CD8-positive, alpha-beta T cell (primary cell): ENCODE measurements at regions of chr3 and their contacts with region 1.

Region 1: DNA sequence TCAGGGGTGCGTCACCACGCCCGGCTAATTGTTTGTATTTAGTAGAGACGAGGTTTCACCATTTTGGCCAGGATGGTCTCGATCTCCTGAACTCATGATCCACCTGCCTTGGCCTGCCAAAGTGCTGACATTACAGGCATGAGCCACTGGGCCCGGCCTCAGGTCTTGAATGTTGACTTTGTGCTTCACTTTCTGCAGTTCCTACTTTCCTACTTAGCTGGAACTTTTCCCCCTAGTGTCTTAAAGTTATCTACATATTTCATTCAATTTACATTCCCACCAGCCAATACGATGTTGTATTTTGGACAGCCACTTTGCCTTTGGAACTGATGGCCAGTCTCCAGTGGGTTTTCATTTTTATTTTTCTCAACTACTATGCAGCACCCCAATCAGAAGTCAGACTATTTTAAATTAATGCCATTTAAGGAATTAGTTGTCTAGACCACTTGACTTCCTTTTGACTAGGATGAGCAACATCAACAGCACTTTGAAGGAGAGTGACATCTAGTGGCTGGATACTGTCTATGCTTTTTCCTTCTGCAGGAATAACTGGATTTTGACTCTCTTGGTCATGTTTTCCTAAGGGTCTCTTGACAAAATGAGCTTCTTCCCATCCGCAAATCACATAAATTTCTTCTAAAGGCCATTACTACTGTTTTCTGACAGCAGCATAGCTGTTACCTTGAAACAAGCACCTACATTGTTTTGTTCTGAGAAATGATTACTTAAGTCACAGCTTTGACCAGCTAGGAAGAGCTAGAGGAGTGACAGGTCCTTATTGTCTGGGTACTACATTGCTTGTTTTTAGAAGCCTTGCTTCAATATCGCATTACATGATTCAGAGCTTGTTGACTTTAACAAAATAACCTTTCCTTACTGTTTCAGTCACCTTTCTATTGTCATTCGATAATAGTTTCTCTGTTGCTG is 140.2 kb downstream of the ITPR1 start:
- DNase-seq: peak in 2 of 9 experiments; percentile 63 to 71
- ATAC-seq: peak; percentile 63
- H3K4me3 ChIP-seq: no peak overlapping the region
- H3K4me3 Mint-ChIP-seq: no peak overlapping the region
- H3K27ac ChIP-seq: no peak overlapping the region
- H3K27ac Mint-ChIP-seq: no peak overlapping the region
- H3K4me1 ChIP-seq: no peaks in the 10 kb centered on the region
- H3K4me1 Mint-ChIP-seq: peaks cover 2% of the 10 kb centered on the region
- H3K27me3 ChIP-seq: no peaks in the 10 kb centered on the region
- H3K27me3 Mint-ChIP-seq: no peaks in the 10 kb centered on the region
- CTCF ChIP-seq: peak; percentile 78

Region 2: GRCh38 chr3:4290272-4290893 is 343.0 kb before region 1 on chr3:
- CTCF ChIA-PET with region 1: no interaction called
- POLR2A ChIA-PET with region 1: no interaction called
- intact Hi-C with region 1: loop called in 1 of 2 experiments (anchors 2 kb)
- DNase-seq: peak in 5 of 9 experiments; percentile 8 to 69 (median 39)
- ATAC-seq: peak; percentile 81
- H3K4me3 ChIP-seq: no peak overlapping the region
- H3K4me3 Mint-ChIP-seq: no peak overlapping the region
- H3K27ac ChIP-seq: no peak overlapping the region
- H3K27ac Mint-ChIP-seq: no peak overlapping the region
- H3K4me1 ChIP-seq: peaks cover 11% of the 10 kb centered on the region
- H3K4me1 Mint-ChIP-seq: peaks cover 17% of the 10 kb centered on the region
- H3K27me3 ChIP-seq: no peaks in the 10 kb centered on the region
- H3K27me3 Mint-ChIP-seq: no peaks in the 10 kb centered on the region
- CTCF ChIP-seq: peak; percentile 97

Region 3: GRCh38 chr3:4350789-4351163 is 282.6 kb before region 1 on chr3:
- CTCF ChIA-PET with region 1: interaction called, 128 read pairs
- POLR2A ChIA-PET with region 1: interaction called, 5 read pairs
- intact Hi-C with region 1: loop called (anchors 1 kb)
- DNase-seq: peak in 8 of 9 experiments; percentile 27 to 87 (median 50)
- ATAC-seq: peak; percentile 86
- H3K4me3 ChIP-seq: peak overlapping the region; percentile 6 to 49
- H3K4me3 Mint-ChIP-seq: peak overlapping the region; percentile 77
- H3K27ac ChIP-seq: peak overlapping the region; percentile 63
- H3K27ac Mint-ChIP-seq: peak overlapping the region; percentile 25
- H3K4me1 ChIP-seq: no peaks in the 10 kb centered on the region
- H3K4me1 Mint-ChIP-seq: peaks cover 15% of the 10 kb centered on the region
- H3K27me3 ChIP-seq: no peaks in the 10 kb centered on the region
- H3K27me3 Mint-ChIP-seq: no peaks in the 10 kb centered on the region
- CTCF ChIP-seq: peak; percentile 82

Region 4: GRCh38 chr3:4512895-4513616 is 120.3 kb before region 1 on chr3:
- CTCF ChIA-PET with region 1: interaction called, 35 read pairs
- POLR2A ChIA-PET with region 1: no interaction called
- intact Hi-C with region 1: no loop called
- DNase-seq: peak in 1 of 9 experiments; percentile 27
- ATAC-seq: peak; percentile 62
- H3K4me3 ChIP-seq: no peak overlapping the region
- H3K4me3 Mint-ChIP-seq: no peak overlapping the region
- H3K27ac ChIP-seq: no peak overlapping the region
- H3K27ac Mint-ChIP-seq: peak overlapping the region; percentile 14
- H3K4me1 ChIP-seq: peaks cover 24% of the 10 kb centered on the region
- H3K4me1 Mint-ChIP-seq: peaks cover 56% of the 10 kb centered on the region
- H3K27me3 ChIP-seq: no peaks in the 10 kb centered on the region
- H3K27me3 Mint-ChIP-seq: no peaks in the 10 kb centered on the region
- CTCF ChIP-seq: no peak

Region 5: DNA sequence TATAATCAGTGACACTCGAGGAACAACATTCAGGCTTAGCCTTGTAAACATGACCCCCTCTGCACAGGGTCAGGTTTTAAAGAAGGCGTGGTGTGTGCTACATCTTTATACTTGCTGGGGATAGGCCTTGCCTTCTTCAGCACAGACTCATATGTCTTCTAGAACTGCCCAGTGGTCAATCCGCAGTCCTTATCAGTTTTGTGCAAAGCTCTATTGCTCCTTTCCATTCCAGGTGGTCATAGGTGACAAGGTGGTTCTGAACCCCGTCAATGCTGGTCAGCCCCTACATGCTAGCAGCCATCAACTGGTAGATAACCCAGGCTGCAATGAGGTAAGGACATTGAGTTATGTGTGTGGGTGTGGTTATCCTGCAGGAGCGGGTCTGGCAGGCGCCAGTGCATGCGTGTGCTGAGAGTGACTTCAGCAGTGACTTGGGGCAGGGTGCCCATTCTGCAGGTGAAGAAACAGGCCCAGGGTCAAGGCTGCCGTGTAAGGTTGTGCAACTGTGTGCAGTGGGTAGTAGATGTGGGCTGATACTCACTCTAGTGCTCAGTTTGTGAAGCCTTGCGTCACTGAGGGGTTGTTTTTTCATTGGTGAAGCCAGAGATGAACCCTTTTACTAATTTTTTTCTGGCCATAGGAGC is 10.7 kb after region 1 on chr3:
- CTCF ChIA-PET with region 1: interaction called, 25 read pairs
- POLR2A ChIA-PET with region 1: no interaction called
- intact Hi-C with region 1: no loop called
- DNase-seq: no peak
- ATAC-seq: no peak
- H3K4me3 ChIP-seq: no peak overlapping the region
- H3K4me3 Mint-ChIP-seq: no peak overlapping the region
- H3K27ac ChIP-seq: no peak overlapping the region
- H3K27ac Mint-ChIP-seq: no peak overlapping the region
- H3K4me1 ChIP-seq: no peaks in the 10 kb centered on the region
- H3K4me1 Mint-ChIP-seq: peaks cover 10% of the 10 kb centered on the region
- H3K27me3 ChIP-seq: no peaks in the 10 kb centered on the region
- H3K27me3 Mint-ChIP-seq: no peaks in the 10 kb centered on the region
- CTCF ChIP-seq: no peak

Region 6: DNA sequence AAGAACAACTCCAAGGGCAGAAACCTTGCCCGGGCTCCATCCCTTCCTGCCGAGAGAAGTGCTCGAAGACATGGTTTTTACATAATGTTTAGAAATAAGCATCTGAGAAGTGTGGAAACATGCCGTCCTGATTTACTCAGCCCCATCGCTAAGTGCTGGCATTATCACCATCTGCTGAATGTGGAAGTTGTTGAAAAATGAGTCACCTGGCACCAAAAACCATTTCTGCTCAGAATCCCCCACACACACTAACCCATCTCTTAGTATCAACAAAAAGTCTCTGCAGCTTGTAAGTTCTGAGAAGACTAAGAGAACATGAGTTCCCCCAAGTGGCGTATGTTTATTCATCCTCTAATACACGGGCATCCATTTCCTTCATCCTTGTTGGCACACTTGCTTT is 437.7 kb after region 1 on chr3:
- CTCF ChIA-PET with region 1: no interaction called
- POLR2A ChIA-PET with region 1: no interaction called
- intact Hi-C with region 1: no loop called
- DNase-seq: no peak
- ATAC-seq: no peak
- H3K4me3 ChIP-seq: no peak overlapping the region
- H3K4me3 Mint-ChIP-seq: no peak overlapping the region
- H3K27ac ChIP-seq: no peak overlapping the region
- H3K27ac Mint-ChIP-seq: no peak overlapping the region
- H3K4me1 ChIP-seq: no peaks in the 10 kb centered on the region
- H3K4me1 Mint-ChIP-seq: no peaks in the 10 kb centered on the region
- H3K27me3 ChIP-seq: no peaks in the 10 kb centered on the region
- H3K27me3 Mint-ChIP-seq: no peaks in the 10 kb centered on the region
- CTCF ChIP-seq: no peak